AG04450 (cell line): ENCODE measurements at regions of chr17 and their contacts with region 1.

Region 1: DNA sequence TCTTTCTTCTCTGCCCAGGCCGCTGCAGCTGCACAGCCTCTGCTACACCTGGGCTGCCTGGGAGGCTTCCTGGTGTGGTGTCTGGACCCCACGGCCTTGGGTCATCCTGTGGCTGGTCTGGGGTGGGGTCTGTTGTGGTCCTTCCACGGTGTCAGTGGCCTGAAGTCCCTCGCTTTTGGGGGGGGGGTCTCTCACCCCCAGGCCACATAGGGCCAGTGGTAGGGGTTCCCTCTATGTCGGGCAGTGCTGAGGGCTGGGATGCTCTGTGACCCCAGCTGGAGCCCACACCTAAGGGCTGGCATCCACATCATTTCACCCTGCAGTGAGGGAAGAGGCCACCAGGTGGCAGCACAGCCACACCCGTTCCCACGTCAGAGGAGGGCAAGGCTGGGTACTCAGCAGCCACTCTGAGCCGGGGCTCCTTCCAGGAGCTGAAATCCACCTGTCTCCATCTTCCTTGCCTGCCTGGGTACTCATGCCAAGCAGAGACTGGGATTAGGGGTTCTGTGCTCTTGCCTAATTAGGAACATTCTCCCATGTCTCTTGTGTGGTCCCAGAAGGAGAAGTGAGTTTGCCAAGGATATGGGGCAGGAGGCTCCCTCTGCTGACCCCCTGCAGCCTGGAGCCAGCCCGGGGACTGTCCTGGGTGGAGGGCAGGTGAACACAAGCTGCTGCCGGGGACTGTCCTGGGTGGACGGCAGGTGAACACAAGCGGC is 13.0 kb downstream of the ENGASE start:
- DNase-seq: no peak
- H3K4me3 ChIP-seq: no peak overlapping the region
- H3K27ac ChIP-seq: no peak overlapping the region
- H3K27me3 ChIP-seq: peaks cover 2% of the 10 kb centered on the region
- CTCF ChIP-seq: peak; percentile 88

Region 2: GRCh38 chr17:79065105-79065670 is 22.4 kb before region 1 on chr17:
- CTCF ChIA-PET with region 1: interaction called, 19 read pairs
- POLR2A ChIA-PET with region 1: no interaction called
- DNase-seq: no peak
- H3K4me3 ChIP-seq: no peak overlapping the region
- H3K27ac ChIP-seq: no peak overlapping the region
- H3K27me3 ChIP-seq: peaks cover 3% of the 10 kb centered on the region
- CTCF ChIP-seq: peak; percentile 54

Region 3: DNA sequence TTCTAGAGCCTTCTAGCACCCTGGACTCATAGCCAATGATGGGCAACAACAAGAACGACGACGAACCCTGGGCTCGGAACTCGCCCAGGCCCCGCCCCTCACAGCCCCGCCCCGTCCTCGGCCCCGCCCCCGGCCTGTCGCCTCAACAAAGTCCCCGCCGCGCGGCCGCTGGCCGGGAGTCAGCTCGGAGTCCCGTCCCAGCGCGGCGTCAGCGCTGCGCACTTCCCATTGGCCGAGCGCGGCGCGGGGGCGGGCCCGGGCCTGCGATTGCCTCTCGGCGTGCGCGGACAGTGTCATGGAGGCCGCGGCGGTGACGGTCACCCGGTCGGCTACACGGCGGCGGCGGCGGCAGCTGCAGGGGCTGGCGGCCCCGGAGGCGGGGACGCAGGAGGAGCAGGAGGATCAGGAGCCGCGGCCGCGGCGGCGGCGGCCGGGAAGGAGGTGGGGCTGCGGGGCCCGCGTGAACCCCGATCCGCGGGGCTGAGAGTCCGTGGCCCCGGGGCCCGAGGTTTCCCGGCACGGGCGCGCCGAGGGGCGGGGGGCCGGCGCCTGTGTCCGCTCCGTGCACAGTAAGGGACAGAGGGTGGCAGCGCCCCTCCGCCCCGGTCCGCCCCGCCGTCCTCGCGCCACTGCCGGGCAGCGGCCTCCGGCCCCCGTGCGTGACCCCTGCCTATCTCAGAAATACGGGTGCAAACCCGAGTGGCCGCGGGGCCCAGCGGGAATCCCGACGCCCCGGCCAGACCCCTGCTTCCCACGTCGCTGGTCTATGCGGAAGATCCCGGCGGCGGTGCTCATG is 12.7 kb before region 1 on chr17 and contains the start of gene ENGASE:
- CTCF ChIA-PET with region 1: interaction called, 18 read pairs
- POLR2A ChIA-PET with region 1: no interaction called
- DNase-seq: peak; percentile 59
- H3K4me3 ChIP-seq: peak within 1 kb of the TSS; percentile 67
- H3K27ac ChIP-seq: no peak within 1 kb of the TSS
- H3K27me3 ChIP-seq: peaks cover 6% of the 10 kb centered on the region
- CTCF ChIP-seq: no peak
- polyA plus RNA-seq, gene ENGASE: 5.9 and 6.0 TPM in 2 replicates

Region 4: DNA sequence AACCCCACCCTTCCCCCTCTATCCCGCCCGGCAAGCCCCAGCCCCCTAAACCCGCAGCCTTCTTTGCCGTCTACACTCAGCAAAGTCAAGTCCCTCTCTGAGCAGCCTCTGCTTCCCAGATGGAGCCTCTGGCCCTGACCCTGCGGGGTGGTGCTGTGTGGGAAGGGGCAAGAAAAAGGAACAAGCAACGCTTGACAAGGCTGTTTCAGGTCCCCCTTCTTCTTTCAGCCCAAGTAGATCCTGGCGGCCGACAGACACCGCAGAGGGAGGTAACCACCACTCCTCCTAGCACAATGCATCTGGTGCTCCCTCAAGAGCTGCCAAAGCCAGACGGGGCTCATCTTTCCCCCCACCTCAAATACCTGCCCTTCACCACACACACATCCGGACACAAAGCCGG is 165.3 kb after region 1 on chr17:
- CTCF ChIA-PET with region 1: no interaction called
- POLR2A ChIA-PET with region 1: no interaction called
- DNase-seq: no peak
- H3K4me3 ChIP-seq: no peak overlapping the region
- H3K27ac ChIP-seq: no peak overlapping the region
- H3K27me3 ChIP-seq: peaks cover 2% of the 10 kb centered on the region
- CTCF ChIP-seq: no peak

Region 5: GRCh38 chr17:79400989-79401703 is 313.6 kb after region 1 on chr17:
- CTCF ChIA-PET with region 1: interaction called, 221 read pairs
- POLR2A ChIA-PET with region 1: no interaction called
- DNase-seq: peak; percentile 7
- H3K4me3 ChIP-seq: peak overlapping the region; percentile 34; the same call in 1 of the 2 replicates
- H3K27ac ChIP-seq: no peak overlapping the region
- H3K27me3 ChIP-seq: peaks cover 26% of the 10 kb centered on the region
- CTCF ChIP-seq: peak; percentile 95